IMR-90 (cell line): ENCODE measurements at regions of chr12 and their contacts with region 1.

Region 1: DNA sequence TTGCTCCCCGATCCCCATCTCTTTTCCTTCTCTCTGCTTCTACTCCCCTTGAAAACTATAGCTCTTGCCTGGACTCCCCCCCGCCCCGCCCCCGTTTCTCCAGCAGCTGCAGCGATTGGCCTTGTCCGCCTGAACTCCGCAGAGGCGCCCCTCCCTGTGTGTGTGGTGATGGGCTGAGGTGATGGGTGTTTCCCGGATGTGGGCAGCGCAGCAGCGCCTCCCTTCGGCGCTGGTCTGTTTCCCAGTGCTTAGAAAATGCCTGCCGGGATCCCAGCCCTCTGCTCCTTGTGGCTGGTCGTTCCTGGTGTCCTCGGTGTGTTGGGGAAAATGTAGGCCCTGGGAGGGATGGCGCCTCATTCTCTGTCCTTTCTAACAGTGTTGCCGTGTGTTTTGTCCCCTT is 43.3 kb downstream of the GALNT8 start:
- DNase-seq: peak; percentile 2
- ATAC-seq: no peak
- H3K4me3 ChIP-seq: no peak overlapping the region
- H3K27ac ChIP-seq: no peak overlapping the region
- H3K4me1 ChIP-seq: no peaks in the 10 kb centered on the region
- H3K27me3 ChIP-seq: peaks cover 3% of the 10 kb centered on the region
- CTCF ChIP-seq: 0 out of 2 replicates have a peak, but pooled peaks have one; percentile 12
- POLR2A ChIP-seq: no peak
- RAD21 ChIP-seq: no peak

Region 2: DNA sequence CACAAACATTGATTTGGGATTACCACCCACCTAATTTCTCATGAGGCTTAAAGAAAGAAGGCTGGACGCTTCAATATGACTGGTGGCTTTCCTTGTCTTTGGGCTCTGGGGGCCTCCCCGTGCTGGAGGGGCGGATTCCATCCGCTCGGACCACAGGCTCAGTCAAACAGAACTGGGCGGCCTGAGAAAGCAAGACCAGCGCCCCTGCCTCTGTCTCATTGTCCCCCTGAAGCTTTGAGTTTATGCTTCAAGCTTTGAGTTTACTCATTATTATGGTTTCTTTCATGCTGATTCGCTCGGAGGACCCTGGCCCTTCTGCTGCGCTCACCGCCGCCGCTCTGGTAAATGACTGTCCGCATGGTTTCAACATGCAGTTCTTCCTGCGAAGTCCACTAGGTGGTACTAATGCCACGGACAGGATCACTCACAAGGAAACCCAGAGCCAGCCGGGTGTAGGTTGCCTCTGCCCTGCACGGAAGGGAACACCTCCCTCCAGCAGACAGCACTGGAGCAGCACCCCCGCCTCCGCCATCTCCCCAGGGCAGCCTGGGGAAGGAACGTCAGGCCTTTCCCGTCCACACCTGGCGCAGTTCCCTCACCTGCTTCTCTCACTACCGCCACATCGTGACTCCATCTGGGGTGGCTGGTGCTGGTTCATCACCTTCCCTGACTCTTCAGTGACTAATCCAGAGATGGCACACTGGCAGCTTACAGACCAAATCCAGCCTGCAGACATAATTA is 455.8 kb before region 1 on chr12:
- CTCF ChIA-PET with region 1: no interaction called
- POLR2A ChIA-PET with region 1: no interaction called
- dilution Hi-C with region 1: no loop called
- in situ Hi-C with region 1: no loop called
- intact Hi-C with region 1: loop called (anchors 2 kb)
- DNase-seq: peak; percentile 79
- ATAC-seq: peak; percentile 99
- H3K4me3 ChIP-seq: no peak overlapping the region
- H3K27ac ChIP-seq: no peak overlapping the region
- H3K4me1 ChIP-seq: no peaks in the 10 kb centered on the region
- H3K27me3 ChIP-seq: peaks cover 12% of the 10 kb centered on the region
- CTCF ChIP-seq: peak; percentile 76
- POLR2A ChIP-seq: no peak
- RAD21 ChIP-seq: peak; percentile 78

Region 3: GRCh38 chr12:4421590-4422031 is 341.9 kb before region 1 on chr12:
- CTCF ChIA-PET with region 1: no interaction called
- POLR2A ChIA-PET with region 1: no interaction called
- dilution Hi-C with region 1: no loop called
- in situ Hi-C with region 1: no loop called
- intact Hi-C with region 1: loop called (anchors 5 kb)
- DNase-seq: peak; percentile 36
- ATAC-seq: peak; percentile 65
- H3K4me3 ChIP-seq: no peak overlapping the region
- H3K27ac ChIP-seq: no peak overlapping the region
- H3K4me1 ChIP-seq: no peaks in the 10 kb centered on the region
- H3K27me3 ChIP-seq: peaks cover 10% of the 10 kb centered on the region
- CTCF ChIP-seq: peak; percentile 56
- POLR2A ChIP-seq: no peak
- RAD21 ChIP-seq: peak; percentile 43

Region 4: GRCh38 chr12:4538207-4539160 is 225.1 kb before region 1 on chr12 and contains the start of gene RAD51AP1:
- CTCF ChIA-PET with region 1: no interaction called
- POLR2A ChIA-PET with region 1: no interaction called
- dilution Hi-C with region 1: no loop called
- in situ Hi-C with region 1: no loop called
- intact Hi-C with region 1: loop called (anchors 5 kb)
- DNase-seq: peak; percentile 97
- ATAC-seq: peak; percentile 100
- H3K4me3 ChIP-seq: peak within 1 kb of the TSS; percentile 97
- H3K27ac ChIP-seq: peak within 1 kb of the TSS; percentile 86
- H3K4me1 ChIP-seq: no peaks in the 10 kb centered on the region
- H3K27me3 ChIP-seq: no peaks in the 10 kb centered on the region
- CTCF ChIP-seq: no peak
- POLR2A ChIP-seq: no peak
- RAD21 ChIP-seq: no peak
- total RNA-seq, gene RAD51AP1: 6.5 and 15.3 TPM in 2 replicates

Region 5: GRCh38 chr12:4579305-4580102 is 184.0 kb before region 1 on chr12:
- CTCF ChIA-PET with region 1: no interaction called
- POLR2A ChIA-PET with region 1: no interaction called
- dilution Hi-C with region 1: no loop called
- in situ Hi-C with region 1: no loop called
- intact Hi-C with region 1: loop called (anchors 1 kb)
- DNase-seq: peak; percentile 13
- ATAC-seq: peak; percentile 60
- H3K4me3 ChIP-seq: no peak overlapping the region
- H3K27ac ChIP-seq: no peak overlapping the region
- H3K4me1 ChIP-seq: no peaks in the 10 kb centered on the region
- H3K27me3 ChIP-seq: peaks cover 10% of the 10 kb centered on the region
- CTCF ChIP-seq: 0 out of 2 replicates have a peak, but pooled peaks have one; percentile 9
- POLR2A ChIP-seq: no peak
- RAD21 ChIP-seq: no peak

Region 6: DNA sequence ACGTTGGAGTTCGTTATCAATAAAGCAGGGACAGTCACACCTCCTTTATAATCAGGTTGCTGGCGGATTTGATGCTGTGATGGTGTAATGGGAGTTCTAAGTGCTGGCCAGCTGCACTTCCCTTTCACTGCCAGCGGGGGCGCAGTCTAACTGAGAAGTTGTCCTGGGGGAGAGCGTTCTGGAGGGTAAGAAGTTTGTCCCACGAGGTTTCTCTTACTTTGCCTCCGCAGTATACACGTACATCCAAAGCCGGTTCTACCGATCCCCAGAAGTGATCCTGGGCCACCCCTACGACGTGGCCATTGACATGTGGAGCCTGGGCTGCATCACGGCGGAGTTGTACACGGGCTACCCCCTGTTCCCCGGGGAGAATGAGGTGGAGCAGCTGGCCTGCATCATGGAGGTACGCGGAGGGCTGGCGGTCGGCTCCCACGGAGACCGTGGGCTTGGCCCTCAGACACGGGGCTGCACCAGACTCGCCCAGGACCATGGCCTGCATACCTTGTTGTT is 158.8 kb before region 1 on chr12:
- CTCF ChIA-PET with region 1: no interaction called
- POLR2A ChIA-PET with region 1: no interaction called
- dilution Hi-C with region 1: no loop called
- in situ Hi-C with region 1: no loop called
- intact Hi-C with region 1: loop called (anchors 2 kb)
- DNase-seq: peak; percentile 85
- ATAC-seq: peak; percentile 100
- H3K4me3 ChIP-seq: peak overlapping the region; percentile 81
- H3K27ac ChIP-seq: peak overlapping the region; percentile 65
- H3K4me1 ChIP-seq: peaks cover 3% of the 10 kb centered on the region
- H3K27me3 ChIP-seq: peaks cover 5% of the 10 kb centered on the region
- CTCF ChIP-seq: peak; percentile 88
- POLR2A ChIP-seq: no peak
- RAD21 ChIP-seq: peak; percentile 60

Region 7: GRCh38 chr12:5309654-5310053 is 546.1 kb after region 1 on chr12:
- CTCF ChIA-PET with region 1: no interaction called
- POLR2A ChIA-PET with region 1: no interaction called
- dilution Hi-C with region 1: no loop called
- in situ Hi-C with region 1: no loop called
- intact Hi-C with region 1: no loop called
- DNase-seq: no peak
- ATAC-seq: no peak
- H3K4me3 ChIP-seq: no peak overlapping the region
- H3K27ac ChIP-seq: no peak overlapping the region
- H3K4me1 ChIP-seq: no peaks in the 10 kb centered on the region
- H3K27me3 ChIP-seq: no peaks in the 10 kb centered on the region; the same call in 1 of the 2 replicates
- CTCF ChIP-seq: no peak
- POLR2A ChIP-seq: no peak
- RAD21 ChIP-seq: no peak